Tibial artery (tissue), 4 donors: ENCODE measurements at regions of chr1 and their contacts with region 1.

Region 1: GRCh38 chr1:84077476-84078107 is 66.5 kb upstream of the PRKACB start:
- DNase-seq: peak; percentile 60 to 84
- H3K4me3 ChIP-seq: peak overlapping the region; percentile 89 to 90
- H3K27ac ChIP-seq: peak overlapping the region; percentile 86 to 91
- H3K4me1 ChIP-seq: peaks cover 0 to 17% (median 8%) of the 10 kb centered on the region in 4 donors
- H3K27me3 ChIP-seq: no peaks in the 10 kb centered on the region
- CTCF ChIP-seq: no peak

Region 2: DNA sequence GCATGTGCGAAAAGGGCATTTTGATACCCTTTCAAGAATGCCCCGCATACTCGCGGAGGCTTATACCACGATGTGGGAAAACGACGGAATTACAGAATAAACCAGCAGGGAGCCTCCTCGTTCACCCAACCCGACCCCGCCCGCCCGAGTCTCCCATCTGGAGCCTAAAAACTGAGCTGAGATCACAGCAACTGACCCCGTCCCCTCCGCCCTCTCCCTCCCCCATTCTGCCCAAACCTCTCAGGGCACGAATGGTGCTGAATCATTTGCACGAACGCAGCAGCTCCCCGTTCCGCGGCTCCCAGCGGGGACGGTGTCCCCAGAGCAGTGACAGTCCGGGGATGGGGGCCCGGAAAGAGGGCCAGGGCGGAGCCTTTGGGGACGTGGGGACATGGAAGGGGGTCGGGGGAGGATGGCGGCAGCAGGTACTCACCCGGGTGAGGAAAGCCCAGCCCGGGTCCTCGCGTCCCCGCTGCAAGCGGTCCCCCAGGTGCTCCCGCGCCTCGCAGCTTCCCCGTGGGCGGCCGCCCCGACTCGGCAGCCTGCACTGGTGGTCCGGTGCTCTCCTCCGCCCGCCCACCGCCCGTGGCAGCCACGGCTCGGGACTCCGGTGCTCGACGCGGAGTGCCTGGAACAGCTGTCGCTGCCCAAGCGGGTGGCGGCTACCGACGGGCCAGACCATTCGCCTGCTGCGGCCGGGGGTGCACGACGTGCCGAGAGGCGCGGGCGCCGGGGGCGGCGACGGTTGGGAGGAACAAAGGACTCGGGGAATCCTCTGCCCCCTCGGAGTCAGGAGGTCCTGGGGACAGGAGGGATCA is 78.9 kb before region 1 on chr1 and contains the start of gene TTLL7:
- intact Hi-C with region 1: loop called (anchors 5 kb)
- DNase-seq: peak; percentile 62 to 91
- H3K4me3 ChIP-seq: peak within 1 kb of the TSS; percentile 85 to 91
- H3K27ac ChIP-seq: peak within 1 kb of the TSS; percentile 96 to 99
- H3K4me1 ChIP-seq: peaks cover 0 to 67% (median 15%) of the 10 kb centered on the region in 4 donors
- H3K27me3 ChIP-seq: no peaks in the 10 kb centered on the region
- CTCF ChIP-seq: no peak

Region 3: GRCh38 chr1:84122780-84123382 is 45.3 kb after region 1 on chr1:
- intact Hi-C with region 1: loop called (anchors 5 kb)
- DNase-seq: peak in 1 of 2 donors; percentile 55
- H3K4me3 ChIP-seq: no peak overlapping the region
- H3K27ac ChIP-seq: no peak overlapping the region
- H3K4me1 ChIP-seq: peaks cover 0 to 8% (median 0%) of the 10 kb centered on the region in 4 donors
- H3K27me3 ChIP-seq: no peaks in the 10 kb centered on the region
- CTCF ChIP-seq: peak; percentile 62 to 68